ENCODE measurements at regions of chr2 and their contacts with region 1.

Region 1: DNA sequence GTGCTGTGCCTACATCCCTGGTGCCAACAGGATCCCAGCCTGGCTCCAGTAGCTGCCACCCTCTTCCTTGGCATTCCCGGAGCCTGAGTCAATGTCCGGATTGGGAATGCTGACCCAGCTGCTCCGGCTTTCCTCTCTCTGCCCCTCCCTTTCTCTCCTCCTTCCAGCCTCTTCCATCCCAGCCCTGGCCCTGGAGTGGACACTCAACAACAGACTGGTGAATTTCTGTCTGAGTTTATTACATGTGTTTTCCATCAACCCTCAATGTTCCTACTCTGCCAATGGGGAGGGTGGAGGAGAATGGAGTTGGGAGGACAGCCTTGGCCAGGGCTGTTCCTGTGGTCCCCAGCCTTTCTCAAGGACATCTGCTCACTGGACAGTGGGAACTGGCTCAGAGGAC is 917 bp upstream of the PRKAG3 start:
- DNase-seq: no peak
- H3K4me3 ChIP-seq: no peak overlapping the region
- H3K4me3 Mint-ChIP-seq: peak overlapping the region in 1 of 2 donors; percentile 77
- H3K27ac ChIP-seq: no peak overlapping the region
- H3K27ac Mint-ChIP-seq: peak overlapping the region in 1 of 7 donors; percentile 18
- H3K4me1 ChIP-seq: peaks cover 5 to 14% of the 10 kb centered on the region in 2 donors
- H3K4me1 Mint-ChIP-seq: peaks cover 20% of the 10 kb centered on the region
- H3K27me3 ChIP-seq: peaks cover 22 to 29% of the 10 kb centered on the region in 2 donors
- H3K27me3 Mint-ChIP-seq: peaks cover 30 to 42% (median 41%) of the 10 kb centered on the region in 3 donors
- CTCF ChIP-seq: no peak

Region 2: GRCh38 chr2:218798767-218799504 is 33.6 kb before region 1 on chr2:
- intact Hi-C with region 1: loop called in 1 of 2 experiments (anchors 5 kb)
- DNase-seq: no peak
- H3K4me3 ChIP-seq: no peak overlapping the region
- H3K4me3 Mint-ChIP-seq: peak overlapping the region in 1 of 2 donors; percentile 79
- H3K27ac ChIP-seq: no peak overlapping the region
- H3K27ac Mint-ChIP-seq: no peak overlapping the region
- H3K4me1 ChIP-seq: peaks cover 5 to 10% of the 10 kb centered on the region in 2 donors
- H3K4me1 Mint-ChIP-seq: peaks cover 14% of the 10 kb centered on the region
- H3K27me3 ChIP-seq: peaks cover 22 to 39% of the 10 kb centered on the region in 2 donors
- H3K27me3 Mint-ChIP-seq: peaks cover 39 to 47% (median 40%) of the 10 kb centered on the region in 3 donors
- CTCF ChIP-seq: no peak

Region 3: GRCh38 chr2:219460424-219460926 is 628.0 kb after region 1 on chr2:
- intact Hi-C with region 1: no loop called
- DNase-seq: no peak
- H3K4me3 ChIP-seq: no peak overlapping the region
- H3K4me3 Mint-ChIP-seq: no peak overlapping the region
- H3K27ac ChIP-seq: no peak overlapping the region
- H3K27ac Mint-ChIP-seq: no peak overlapping the region
- H3K4me1 ChIP-seq: peaks cover 0 to 5% of the 10 kb centered on the region in 2 donors
- H3K4me1 Mint-ChIP-seq: peaks cover 7% of the 10 kb centered on the region
- H3K27me3 ChIP-seq: no peaks in the 10 kb centered on the region
- H3K27me3 Mint-ChIP-seq: peaks cover 2 to 7% (median 4%) of the 10 kb centered on the region in 3 donors
- CTCF ChIP-seq: no peak